ENCODE measurements at regions of chr9 and their contacts with region 1.

Region 1: GRCh38 chr9:129988607-129989361 is 54.2 kb downstream of the FNBP1 start:
- DNase-seq: peak; percentile 51
- H3K4me3 Mint-ChIP-seq: peak overlapping the region; percentile 10
- H3K27ac Mint-ChIP-seq: peak overlapping the region; percentile 87
- H3K4me1 Mint-ChIP-seq: peaks cover 78% of the 10 kb centered on the region
- H3K27me3 Mint-ChIP-seq: no peaks in the 10 kb centered on the region

Region 2: GRCh38 chr9:129944506-129945116 is 44.2 kb before region 1 on chr9:
- CTCF ChIA-PET with region 1: no interaction called
- POLR2A ChIA-PET with region 1: no interaction called
- intact Hi-C with region 1: no loop called
- DNase-seq: peak; percentile 76
- H3K4me3 Mint-ChIP-seq: peak overlapping the region; percentile 12
- H3K27ac Mint-ChIP-seq: peak overlapping the region; percentile 71
- H3K4me1 Mint-ChIP-seq: peaks cover 49% of the 10 kb centered on the region
- H3K27me3 Mint-ChIP-seq: no peaks in the 10 kb centered on the region

Region 3: DNA sequence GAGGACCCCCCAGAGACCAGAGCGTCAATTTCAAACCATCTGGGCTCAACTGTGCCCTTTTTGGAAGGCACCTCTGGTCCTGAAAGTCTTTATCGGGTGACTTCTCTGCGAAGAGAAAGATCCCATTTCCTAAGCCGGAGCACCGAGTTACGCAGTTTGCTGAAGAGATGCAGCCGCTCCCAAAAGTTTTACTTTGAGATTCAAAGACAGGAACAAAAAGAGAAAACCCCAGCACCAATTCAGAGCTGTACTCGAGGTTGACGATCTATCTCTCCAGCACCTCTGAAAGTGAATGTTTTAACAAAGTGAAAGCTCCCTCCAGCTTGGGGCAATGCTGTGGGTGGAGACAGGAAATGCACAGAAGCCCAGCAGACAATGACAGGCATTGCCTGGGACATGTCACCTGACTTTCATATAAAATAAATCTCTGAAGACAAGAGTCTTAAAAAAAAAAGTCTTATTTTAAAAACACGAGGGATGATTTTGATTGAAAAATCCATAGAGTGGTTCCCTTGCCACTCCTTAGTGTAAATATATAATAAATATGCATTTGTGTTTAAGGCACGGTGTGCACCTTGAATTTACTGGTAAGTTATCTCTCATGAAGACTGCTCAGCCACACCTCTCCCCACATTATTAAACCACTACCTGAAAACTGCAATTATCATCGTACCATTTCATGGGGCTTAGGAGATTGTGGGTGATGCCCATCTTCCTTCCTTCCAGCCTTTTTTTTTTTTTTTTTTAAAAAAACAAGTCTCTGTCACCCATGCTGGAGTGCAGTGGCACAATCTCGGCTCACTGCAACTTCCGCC is 25.7 kb before region 1 on chr9:
- CTCF ChIA-PET with region 1: interaction called, 5 read pairs
- POLR2A ChIA-PET with region 1: interaction called, 4 read pairs
- intact Hi-C with region 1: loop called (anchors 1 kb)
- DNase-seq: peak; percentile 86
- H3K4me3 Mint-ChIP-seq: peak overlapping the region; percentile 77
- H3K27ac Mint-ChIP-seq: peak overlapping the region; percentile 92
- H3K4me1 Mint-ChIP-seq: peaks cover 76% of the 10 kb centered on the region
- H3K27me3 Mint-ChIP-seq: no peaks in the 10 kb centered on the region

Region 4: DNA sequence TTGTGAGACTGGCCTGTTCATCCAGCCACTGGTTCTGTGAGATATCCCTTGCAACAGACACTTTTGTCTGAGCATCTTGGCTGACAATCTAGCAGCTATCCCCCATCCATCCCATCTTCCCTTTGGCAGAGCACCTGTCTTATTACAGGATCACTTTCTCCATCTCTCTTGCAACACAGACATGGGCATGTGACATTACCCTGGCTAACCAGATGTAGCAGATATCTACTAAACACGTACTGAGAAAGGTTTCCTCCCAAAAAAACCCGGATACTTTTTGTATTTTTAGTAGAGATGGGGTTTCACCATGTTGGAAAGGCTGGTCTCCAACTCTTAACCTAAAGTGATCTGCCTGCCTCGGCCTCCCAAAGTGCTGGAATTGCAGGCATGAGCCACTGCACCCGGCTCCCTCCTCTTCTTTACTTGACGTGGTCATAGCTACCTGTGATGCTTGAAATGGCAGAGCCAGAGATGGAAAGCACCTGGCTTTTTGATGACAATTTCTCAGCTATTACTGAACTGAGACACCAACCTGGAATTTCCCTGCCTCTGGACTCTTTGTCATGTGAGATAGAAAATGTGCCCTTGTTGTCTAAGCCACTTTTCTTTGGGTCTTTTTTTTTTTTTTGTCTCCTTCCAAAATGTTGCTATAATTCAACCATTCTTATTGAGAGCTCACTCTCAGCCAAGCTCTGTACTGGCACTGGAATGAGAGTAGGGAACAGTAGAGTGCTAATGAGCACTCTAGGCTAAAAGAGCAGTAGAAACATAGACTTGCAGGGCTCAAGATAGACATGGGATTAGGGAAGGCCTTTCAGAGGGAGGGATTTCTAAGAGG is 21.6 kb after region 1 on chr9:
- CTCF ChIA-PET with region 1: no interaction called
- POLR2A ChIA-PET with region 1: interaction called, 4 read pairs
- intact Hi-C with region 1: loop called (anchors 2 kb)
- DNase-seq: peak; percentile 71
- H3K4me3 Mint-ChIP-seq: peak overlapping the region; percentile 61
- H3K27ac Mint-ChIP-seq: peak overlapping the region; percentile 93
- H3K4me1 Mint-ChIP-seq: peaks cover 84% of the 10 kb centered on the region
- H3K27me3 Mint-ChIP-seq: no peaks in the 10 kb centered on the region

Region 5: DNA sequence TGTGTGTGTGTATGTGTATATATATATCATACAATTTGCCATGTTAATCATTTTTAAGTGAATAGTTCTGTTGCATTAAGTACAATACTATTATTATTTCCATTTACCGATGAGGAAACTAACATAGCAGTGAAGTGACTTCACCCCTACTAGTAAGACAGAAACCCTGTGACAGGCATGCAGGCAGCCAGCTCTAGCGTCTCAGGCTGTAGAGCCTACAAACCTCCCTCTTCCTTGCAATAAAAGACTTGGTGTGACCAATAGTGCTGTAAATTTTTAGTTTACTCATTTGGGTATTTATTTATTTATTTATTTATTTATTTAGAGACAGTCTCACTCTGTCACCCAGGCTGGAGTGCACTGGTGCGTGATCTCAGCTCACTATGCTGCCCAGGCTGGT is 29.5 kb after region 1 on chr9:
- CTCF ChIA-PET with region 1: interaction called, 4 read pairs
- POLR2A ChIA-PET with region 1: interaction called, 7 read pairs
- intact Hi-C with region 1: loop called (anchors 1 kb)
- DNase-seq: peak; percentile 58
- H3K4me3 Mint-ChIP-seq: no peak overlapping the region
- H3K27ac Mint-ChIP-seq: peak overlapping the region; percentile 76
- H3K4me1 Mint-ChIP-seq: peaks cover 77% of the 10 kb centered on the region
- H3K27me3 Mint-ChIP-seq: no peaks in the 10 kb centered on the region

Region 6: DNA sequence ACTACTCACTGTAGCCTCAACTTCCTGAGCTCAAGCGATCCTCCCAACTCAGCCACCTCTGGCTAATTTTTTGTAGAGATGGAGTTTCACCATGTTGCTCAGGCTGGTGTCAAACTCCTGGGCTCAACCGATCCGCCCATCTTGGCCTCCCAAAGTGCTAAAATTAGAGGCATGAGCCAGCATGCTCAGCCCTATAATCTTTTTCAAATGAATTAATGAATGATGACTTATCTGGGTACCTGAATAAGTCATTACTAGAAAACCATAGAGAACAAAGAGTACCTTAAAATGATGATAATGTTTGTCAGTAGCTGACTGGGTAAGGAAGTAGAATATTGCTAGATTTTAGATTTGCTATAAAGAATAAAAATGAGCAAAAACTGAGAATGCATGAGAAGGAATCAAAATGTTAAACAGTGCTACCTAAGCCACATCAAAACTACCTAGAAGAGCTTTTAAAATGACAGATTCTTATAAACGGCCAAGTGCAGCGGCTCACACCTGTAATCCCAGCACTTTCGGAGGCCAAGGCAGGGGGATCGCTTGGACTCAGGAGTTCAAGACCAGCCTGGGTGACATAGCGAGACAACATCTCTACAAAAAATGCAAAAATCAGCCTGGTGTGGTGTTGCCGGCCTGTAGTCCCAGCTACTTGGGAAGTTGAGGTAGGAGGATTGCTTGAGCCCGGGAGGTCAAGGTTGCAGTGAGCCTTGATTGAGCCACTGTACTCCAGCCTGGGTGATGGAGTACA is 40.6 kb after region 1 on chr9:
- CTCF ChIA-PET with region 1: no interaction called
- POLR2A ChIA-PET with region 1: interaction called, 55 read pairs
- intact Hi-C with region 1: loop called (anchors 1 kb)
- DNase-seq: peak; percentile 77
- H3K4me3 Mint-ChIP-seq: peak overlapping the region; percentile 33
- H3K27ac Mint-ChIP-seq: peak overlapping the region; percentile 92
- H3K4me1 Mint-ChIP-seq: peaks cover 94% of the 10 kb centered on the region
- H3K27me3 Mint-ChIP-seq: no peaks in the 10 kb centered on the region

Region 7: GRCh38 chr9:130034570-130034969 is 45.8 kb after region 1 on chr9:
- CTCF ChIA-PET with region 1: interaction called, 4 read pairs
- POLR2A ChIA-PET with region 1: interaction called, 55 read pairs
- intact Hi-C with region 1: loop called (anchors 1 kb)
- DNase-seq: peak; percentile 54
- H3K4me3 Mint-ChIP-seq: peak overlapping the region; percentile 49
- H3K27ac Mint-ChIP-seq: peak overlapping the region; percentile 96
- H3K4me1 Mint-ChIP-seq: peaks cover 81% of the 10 kb centered on the region
- H3K27me3 Mint-ChIP-seq: no peaks in the 10 kb centered on the region

Region 8: GRCh38 chr9:130298663-130299279 is 310.0 kb after region 1 on chr9:
- CTCF ChIA-PET with region 1: no interaction called
- POLR2A ChIA-PET with region 1: no interaction called
- intact Hi-C with region 1: no loop called
- DNase-seq: no peak
- H3K4me3 Mint-ChIP-seq: no peak overlapping the region
- H3K27ac Mint-ChIP-seq: no peak overlapping the region
- H3K4me1 Mint-ChIP-seq: no peaks in the 10 kb centered on the region
- H3K27me3 Mint-ChIP-seq: peaks cover 11% of the 10 kb centered on the region

Measured in activated CD4-positive, alpha-beta memory T cell treated with anti-CD3 and anti-CD28 coated beads for 36 hours (primary cell).